ENCODE measurements at regions of chr2 and their contacts with region 1.

Region 1: GRCh38 chr2:206783718-206784117 is 18.3 kb downstream of the FASTKD2 start:
- DNase-seq: no peak
- H3K4me3 ChIP-seq: no peak overlapping the region
- H3K27me3 ChIP-seq: no peaks in the 10 kb centered on the region
- CTCF ChIP-seq: peak; percentile 66

Region 2: GRCh38 chr2:206693399-206694137 is 90.2 kb before region 1 on chr2:
- CTCF ChIA-PET with region 1: interaction called, 12 read pairs
- POLR2A ChIA-PET with region 1: no interaction called
- DNase-seq: peak; percentile 7
- H3K4me3 ChIP-seq: no peak overlapping the region
- H3K27me3 ChIP-seq: peaks cover 2% of the 10 kb centered on the region; the same call in 1 of the 2 replicates
- CTCF ChIP-seq: peak; percentile 59

Region 3: GRCh38 chr2:206766057-206766930 is 17.4 kb before region 1 on chr2:
- CTCF ChIA-PET with region 1: interaction called, 12 read pairs
- POLR2A ChIA-PET with region 1: no interaction called
- DNase-seq: no peak
- H3K4me3 ChIP-seq: peak overlapping the region; percentile 57
- H3K27me3 ChIP-seq: no peaks in the 10 kb centered on the region
- CTCF ChIP-seq: no peak

Measured in BJ (cell line).